A549 (cell line): ENCODE measurements at regions of chr5 and their contacts with region 1.

Region 1: DNA sequence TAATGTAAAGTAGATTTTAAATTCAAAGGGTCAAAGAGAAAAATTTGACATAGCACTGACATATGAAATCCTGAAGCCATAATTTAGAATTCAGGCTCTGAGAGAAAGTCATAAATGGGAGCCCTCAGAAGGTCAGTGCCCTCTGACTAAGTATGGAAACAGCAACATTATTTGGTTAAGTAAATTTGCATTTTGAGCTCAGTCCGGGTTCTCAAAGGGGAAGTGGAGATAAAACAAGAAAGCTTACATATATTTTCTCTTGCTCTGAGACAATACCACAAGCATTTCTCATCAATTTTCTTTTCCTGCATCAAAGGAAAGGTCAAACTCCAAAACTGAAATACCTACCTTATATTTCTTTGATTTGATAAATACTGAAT is 348.0 kb downstream of the SEMA5A start:
- DNase-seq: no peak
- ATAC-seq: no peak
- H3K4me3 ChIP-seq: no peak overlapping the region
- H3K27ac ChIP-seq: no peak overlapping the region
- H3K4me1 ChIP-seq: no peaks in the 10 kb centered on the region
- CTCF ChIP-seq: no peak
- EP300 ChIP-seq: no peak
- POLR2A ChIP-seq: no peak
- RAD21 ChIP-seq: no peak

Region 2: GRCh38 chr5:9207817-9208418 is 10.0 kb after region 1 on chr5:
- CTCF ChIA-PET with region 1: interaction called, 10 read pairs
- POLR2A ChIA-PET with region 1: no interaction called
- DNase-seq: peak; percentile 25 to 52
- ATAC-seq: peak; percentile 68 to 85; a peak in 4 of 6 replicates
- H3K4me3 ChIP-seq: no peak overlapping the region
- H3K27ac ChIP-seq: no peak overlapping the region
- H3K4me1 ChIP-seq: no peaks in the 10 kb centered on the region
- CTCF ChIP-seq: peak; percentile 59
- EP300 ChIP-seq: no peak
- POLR2A ChIP-seq: no peak
- RAD21 ChIP-seq: peak; percentile 70 to 77